GM10248 (cell line): ENCODE measurements at regions of chr10 and their contacts with region 1.

Region 1: DNA sequence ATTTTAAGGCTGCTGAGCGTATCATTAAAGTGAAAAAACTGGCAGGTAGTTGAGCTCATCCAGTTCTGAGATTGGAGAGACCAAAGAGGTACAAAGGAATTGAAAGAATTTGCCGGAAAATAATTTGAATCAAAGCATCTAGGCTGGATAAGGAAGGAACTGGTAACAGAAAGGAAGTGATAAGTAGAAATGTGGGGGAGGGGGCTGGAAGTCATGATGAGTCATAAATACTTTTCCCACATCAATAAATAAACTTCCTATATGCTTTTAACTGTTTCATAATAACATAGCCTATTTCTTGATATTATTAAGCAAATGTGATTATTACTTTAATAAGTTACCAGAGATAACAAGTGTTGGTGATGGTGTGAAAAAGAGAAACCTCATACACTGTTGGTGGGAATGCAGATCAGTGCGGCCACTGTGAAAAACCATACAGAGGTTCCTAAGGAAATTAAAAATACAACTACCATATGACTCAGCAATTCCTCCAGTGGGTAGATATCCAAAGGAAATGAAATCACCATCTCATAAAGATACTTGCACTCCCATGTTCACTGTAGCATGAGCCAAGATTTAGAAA is 27.0 kb downstream of the ZNF438 start:
- DNase-seq: no peak
- CTCF ChIP-seq: no peak

Region 2: DNA sequence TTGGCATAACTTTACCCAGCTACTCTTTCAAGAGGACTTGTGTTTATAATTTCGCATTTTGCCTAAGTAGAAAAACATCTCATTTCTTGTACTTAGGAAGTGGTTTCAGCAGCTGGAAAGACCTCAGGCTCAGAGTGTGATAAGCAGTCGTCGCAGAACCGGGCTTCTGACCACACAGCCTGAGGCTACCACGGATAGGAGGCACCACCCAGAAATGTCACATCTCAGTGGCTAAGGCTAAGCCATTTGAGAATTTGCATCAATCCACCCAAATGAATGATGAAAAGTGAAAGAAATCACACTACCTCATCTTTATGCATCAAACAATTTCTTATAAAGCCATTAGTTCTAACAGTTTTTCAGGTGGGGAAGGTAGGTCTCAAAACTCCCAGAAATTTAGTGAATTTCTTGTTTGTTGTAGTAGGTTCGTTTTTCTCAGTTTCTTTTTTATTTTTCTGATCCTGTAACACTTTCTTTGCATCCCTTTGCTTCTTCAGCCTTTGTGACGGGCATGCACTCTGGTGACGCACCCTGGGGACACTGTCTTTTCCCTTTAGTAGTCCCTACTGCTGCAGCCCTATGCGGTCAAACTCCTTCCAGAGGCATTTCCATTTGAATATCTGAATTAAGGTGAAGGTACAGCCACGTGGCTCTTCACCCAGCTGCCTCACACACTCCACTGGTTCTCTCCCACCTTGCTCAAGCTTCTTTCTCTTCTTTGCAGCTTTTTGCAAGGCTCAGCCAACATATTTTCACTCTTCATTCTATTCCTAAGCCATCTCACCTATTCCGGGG is 502.2 kb before region 1 on chr10:
- CTCF ChIA-PET with region 1: no interaction called
- POLR2A ChIA-PET with region 1: no interaction called
- DNase-seq: peak; percentile 61
- CTCF ChIP-seq: no peak

Region 3: DNA sequence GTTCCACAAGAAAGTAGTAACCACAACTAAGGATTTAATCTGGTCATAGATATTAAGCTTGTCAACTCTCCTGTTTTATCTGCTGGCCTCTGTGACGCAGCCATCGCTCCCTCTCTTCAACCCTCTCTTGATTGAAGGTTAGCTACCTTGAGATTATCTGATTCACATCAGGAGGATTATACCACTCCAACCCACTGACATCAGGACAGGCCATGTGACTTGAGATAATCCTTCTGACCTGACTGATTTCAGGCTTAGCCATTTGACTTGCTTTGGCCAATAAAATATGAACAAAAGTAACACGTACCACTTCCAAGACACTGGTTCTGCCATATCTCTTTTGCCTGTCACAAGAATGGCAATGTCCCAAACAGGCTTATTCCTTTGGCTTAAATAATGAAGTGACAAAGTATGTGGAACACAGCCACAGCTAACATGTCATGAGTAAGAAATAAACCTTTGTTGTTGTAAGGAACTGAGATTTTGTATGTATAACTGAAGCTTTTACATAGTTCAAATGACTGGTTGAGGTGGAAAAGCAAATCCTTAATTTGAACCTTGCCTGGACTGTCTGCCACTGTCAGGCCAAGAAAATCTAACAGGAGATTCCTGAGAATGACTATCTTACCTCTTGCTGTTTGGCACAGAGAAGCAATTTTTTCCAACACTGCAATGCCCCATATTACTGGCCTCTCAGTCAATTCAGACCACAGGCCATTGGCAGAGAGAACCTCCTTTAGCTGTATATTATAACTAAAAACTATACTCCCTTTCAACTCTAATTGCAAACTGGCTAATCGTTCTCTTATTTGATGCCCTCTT is 13.0 kb after region 1 on chr10:
- CTCF ChIA-PET with region 1: interaction called, 10 read pairs
- POLR2A ChIA-PET with region 1: no interaction called
- DNase-seq: no peak
- CTCF ChIP-seq: no peak